ENCODE measurements at regions of chr2 and their contacts with region 1.

Region 1: DNA sequence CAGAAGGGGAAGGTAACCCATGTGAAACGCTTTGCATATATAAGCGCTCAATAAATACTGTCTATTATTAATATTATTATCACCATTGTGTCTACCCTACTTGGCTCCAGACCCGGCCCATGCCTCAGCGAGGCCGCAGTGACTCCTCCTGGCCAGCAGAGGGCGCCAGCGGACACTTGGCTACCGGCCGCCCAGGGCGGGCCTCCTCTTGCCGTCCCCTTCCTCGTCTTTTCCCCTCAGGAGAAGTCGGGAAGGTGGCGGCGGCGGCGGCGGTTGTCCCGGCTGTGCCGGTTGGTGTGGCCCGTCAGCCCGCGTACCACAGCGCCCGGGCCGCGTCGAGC is at the start of gene AGFG1:
- DNase-seq: peak; percentile 89
- ATAC-seq: peak; percentile 85
- H3K4me3 ChIP-seq: peak within 1 kb of the TSS; percentile 46 to 86 (median 75)
- H3K4me3 Mint-ChIP-seq: peak within 1 kb of the TSS; percentile 86
- H3K27ac ChIP-seq: peak within 1 kb of the TSS; percentile 74 to 87
- H3K27ac Mint-ChIP-seq: peak within 1 kb of the TSS; percentile 80
- H3K4me1 ChIP-seq: peaks cover 19 to 33% of the 10 kb centered on the region in 2 donors
- H3K4me1 Mint-ChIP-seq: peaks cover 37% of the 10 kb centered on the region
- H3K27me3 ChIP-seq: no peaks in the 10 kb centered on the region
- H3K27me3 Mint-ChIP-seq: no peaks in the 10 kb centered on the region
- CTCF ChIP-seq: peak; percentile 94
- total RNA-seq, gene AGFG1: 83.3 and 95.0 TPM in 2 replicates

Region 2: DNA sequence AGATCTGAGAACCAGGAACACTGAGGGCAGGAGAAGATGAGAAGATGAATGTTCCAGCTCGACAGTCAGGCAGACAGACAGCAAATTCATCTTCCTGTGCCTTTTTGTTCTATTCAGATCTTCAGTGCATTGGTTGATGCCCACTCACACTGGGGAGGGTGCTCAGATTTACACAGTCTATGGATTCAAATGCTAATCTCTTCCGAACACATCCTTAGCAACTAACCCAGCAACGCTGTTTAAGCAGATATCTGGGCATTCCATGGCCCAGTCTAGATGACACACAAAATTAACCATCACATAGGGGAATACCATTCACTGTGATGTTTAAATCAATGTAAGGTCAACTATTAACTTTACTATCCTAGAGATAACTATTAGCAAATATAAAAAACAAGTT is 1500.5 kb before region 1 on chr2:
- CTCF ChIA-PET with region 1: no interaction called
- POLR2A ChIA-PET with region 1: no interaction called
- intact Hi-C with region 1: no loop called
- DNase-seq: no peak
- ATAC-seq: no peak
- H3K4me3 ChIP-seq: no peak overlapping the region
- H3K4me3 Mint-ChIP-seq: no peak overlapping the region
- H3K27ac ChIP-seq: no peak overlapping the region
- H3K27ac Mint-ChIP-seq: no peak overlapping the region
- H3K4me1 ChIP-seq: no peaks in the 10 kb centered on the region
- H3K4me1 Mint-ChIP-seq: no peaks in the 10 kb centered on the region
- H3K27me3 ChIP-seq: no peaks in the 10 kb centered on the region
- H3K27me3 Mint-ChIP-seq: no peaks in the 10 kb centered on the region
- CTCF ChIP-seq: no peak

Region 3: GRCh38 chr2:227324995-227325838 is 146.7 kb before region 1 on chr2 and contains the start of gene MFF:
- CTCF ChIA-PET with region 1: interaction called, 4 read pairs
- POLR2A ChIA-PET with region 1: no interaction called
- intact Hi-C with region 1: loop called (anchors 5 kb)
- DNase-seq: peak; percentile 95
- ATAC-seq: peak; percentile 98
- H3K4me3 ChIP-seq: peak within 1 kb of the TSS; percentile 78 to 88 (median 80)
- H3K4me3 Mint-ChIP-seq: peak within 1 kb of the TSS; percentile 96
- H3K27ac ChIP-seq: peak within 1 kb of the TSS; percentile 72 to 89
- H3K27ac Mint-ChIP-seq: peak within 1 kb of the TSS; percentile 95
- H3K4me1 ChIP-seq: peaks cover 20 to 23% of the 10 kb centered on the region in 2 donors
- H3K4me1 Mint-ChIP-seq: peaks cover 33% of the 10 kb centered on the region
- H3K27me3 ChIP-seq: no peaks in the 10 kb centered on the region
- H3K27me3 Mint-ChIP-seq: no peaks in the 10 kb centered on the region
- CTCF ChIP-seq: peak; percentile 43
- total RNA-seq, gene MFF: 70.4 and 75.2 TPM in 2 replicates

Region 4: DNA sequence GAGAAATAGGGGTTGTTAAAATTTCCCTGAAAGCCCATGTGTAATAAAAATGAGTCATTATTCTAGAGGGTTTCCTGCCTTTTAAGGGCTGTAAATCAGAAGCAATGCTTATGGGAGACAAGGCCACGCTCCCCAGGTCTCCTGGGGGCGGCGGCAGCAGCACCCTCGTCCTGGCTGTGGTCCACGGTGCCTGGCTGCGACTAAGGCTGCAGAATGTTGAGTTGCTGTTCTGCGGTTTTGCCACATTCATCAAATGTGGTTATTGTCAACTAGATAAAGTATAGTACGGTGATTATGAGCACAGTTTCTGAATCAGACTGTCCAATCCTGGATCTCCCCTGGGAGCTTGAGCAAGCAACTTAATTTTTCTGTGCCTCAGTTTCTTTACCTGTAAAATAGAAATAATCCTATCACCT is 11.8 kb before region 1 on chr2:
- CTCF ChIA-PET with region 1: interaction called, 8 read pairs
- POLR2A ChIA-PET with region 1: no interaction called
- intact Hi-C with region 1: loop called (anchors 1 kb)
- DNase-seq: peak; percentile 36
- ATAC-seq: peak; percentile 79
- H3K4me3 ChIP-seq: no peak overlapping the region
- H3K4me3 Mint-ChIP-seq: peak overlapping the region; percentile 50
- H3K27ac ChIP-seq: no peak overlapping the region
- H3K27ac Mint-ChIP-seq: peak overlapping the region; percentile 27
- H3K4me1 ChIP-seq: peaks cover 52 to 54% of the 10 kb centered on the region in 2 donors
- H3K4me1 Mint-ChIP-seq: peaks cover 66% of the 10 kb centered on the region
- H3K27me3 ChIP-seq: no peaks in the 10 kb centered on the region
- H3K27me3 Mint-ChIP-seq: no peaks in the 10 kb centered on the region
- CTCF ChIP-seq: no peak

Region 5: GRCh38 chr2:227515742-227516141 is 43.8 kb after region 1 on chr2:
- CTCF ChIA-PET with region 1: interaction called, 5 read pairs
- POLR2A ChIA-PET with region 1: no interaction called
- intact Hi-C with region 1: loop called (anchors 5 kb)
- DNase-seq: no peak
- ATAC-seq: no peak
- H3K4me3 ChIP-seq: no peak overlapping the region
- H3K4me3 Mint-ChIP-seq: no peak overlapping the region
- H3K27ac ChIP-seq: peak overlapping the region in 1 of 2 donors; percentile 7
- H3K27ac Mint-ChIP-seq: no peak overlapping the region
- H3K4me1 ChIP-seq: peaks cover 20 to 41% of the 10 kb centered on the region in 2 donors
- H3K4me1 Mint-ChIP-seq: peaks cover 81% of the 10 kb centered on the region
- H3K27me3 ChIP-seq: no peaks in the 10 kb centered on the region
- H3K27me3 Mint-ChIP-seq: no peaks in the 10 kb centered on the region
- CTCF ChIP-seq: no peak